Spleen (tissue), 13 donors: ENCODE measurements at regions of chr1 and their contacts with region 1.

Region 1: DNA sequence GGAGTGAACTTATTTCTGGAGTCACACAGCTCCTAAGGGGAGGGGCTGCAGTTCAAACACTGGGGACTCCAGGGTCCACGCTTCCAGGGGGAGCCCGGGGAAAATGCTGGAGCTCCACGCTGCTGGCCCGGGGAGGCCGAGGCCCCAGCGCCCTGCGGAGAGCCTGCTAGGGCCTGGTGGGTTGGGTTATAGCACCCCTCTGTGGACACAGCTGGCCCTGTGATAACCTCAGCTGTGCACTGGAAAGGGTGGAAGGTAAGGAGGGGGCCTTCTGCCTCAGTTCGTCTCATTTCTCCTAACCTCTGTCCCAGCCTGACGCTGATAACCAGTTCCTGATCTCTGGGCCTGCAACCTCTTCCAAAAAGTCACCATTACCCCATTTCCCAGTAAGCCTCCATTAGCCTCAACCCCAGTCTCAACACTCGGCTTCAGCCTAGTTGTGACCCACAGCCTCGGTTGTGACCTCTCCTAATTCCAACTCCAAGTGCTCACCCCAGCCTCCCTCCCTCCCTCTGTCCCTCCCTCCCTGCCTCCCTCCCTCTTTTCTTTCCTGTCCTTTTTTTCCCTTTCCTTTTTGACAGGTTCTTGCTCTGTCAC is 7.1 kb downstream of the NBL1 start:
- DNase-seq: no peak
- H3K4me3 ChIP-seq: peak overlapping the region in 1 of 8 donors; percentile 13
- H3K27ac ChIP-seq: peak overlapping the region in 6 of 8 donors; percentile 27 to 74 (median 48)
- H3K4me1 ChIP-seq: peaks cover 7 to 60% (median 32%) of the 10 kb centered on the region in 6 donors
- H3K27me3 ChIP-seq: peaks cover 0 to 14% (median 0%) of the 10 kb centered on the region in 7 donors
- CTCF ChIP-seq: peak; percentile 26 to 76 (median 59)
- POLR2A ChIP-seq: no peak

Region 2: DNA sequence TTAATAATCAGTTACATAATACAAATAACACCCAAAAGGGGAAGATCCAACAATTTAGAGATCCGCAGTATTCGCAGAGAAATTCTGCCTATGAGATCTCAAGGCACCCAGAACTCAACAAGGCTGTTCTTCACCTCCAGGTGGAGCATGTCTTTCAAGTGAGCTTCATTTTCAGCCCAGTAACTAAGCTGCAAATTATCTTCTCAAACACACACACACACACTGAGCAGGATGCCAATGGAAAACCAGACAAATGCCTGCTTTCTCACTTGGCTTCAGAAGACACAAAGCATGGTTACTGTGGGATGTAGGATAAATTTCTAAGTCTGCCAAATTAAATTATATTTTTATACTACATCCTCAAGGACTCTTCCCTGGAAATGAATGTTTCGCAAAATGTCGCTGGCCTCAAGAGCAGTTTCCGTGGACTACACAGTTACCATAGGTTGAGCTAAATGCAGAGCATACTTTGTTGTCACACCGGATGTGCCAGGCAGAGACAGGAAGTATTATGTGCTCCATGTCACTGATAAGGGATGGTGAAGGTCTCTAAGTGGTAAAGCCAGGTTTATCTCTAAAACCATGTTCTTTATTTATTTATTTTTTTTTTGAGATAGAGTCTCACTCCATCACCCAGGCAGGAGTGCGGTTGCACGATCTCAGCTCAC is 471.5 kb before region 1 on chr1:
- intact Hi-C with region 1: loop called (anchors 5 kb)
- DNase-seq: no peak
- H3K4me3 ChIP-seq: no peak overlapping the region
- H3K27ac ChIP-seq: peak overlapping the region in 5 of 8 donors; percentile 19 to 56 (median 32)
- H3K4me1 ChIP-seq: peaks cover 0 to 16% (median 6%) of the 10 kb centered on the region in 6 donors
- H3K27me3 ChIP-seq: no peaks in the 10 kb centered on the region
- CTCF ChIP-seq: peak in 5 of 11 experiments; percentile 23 to 52 (median 38)
- POLR2A ChIP-seq: no peak

Region 3: DNA sequence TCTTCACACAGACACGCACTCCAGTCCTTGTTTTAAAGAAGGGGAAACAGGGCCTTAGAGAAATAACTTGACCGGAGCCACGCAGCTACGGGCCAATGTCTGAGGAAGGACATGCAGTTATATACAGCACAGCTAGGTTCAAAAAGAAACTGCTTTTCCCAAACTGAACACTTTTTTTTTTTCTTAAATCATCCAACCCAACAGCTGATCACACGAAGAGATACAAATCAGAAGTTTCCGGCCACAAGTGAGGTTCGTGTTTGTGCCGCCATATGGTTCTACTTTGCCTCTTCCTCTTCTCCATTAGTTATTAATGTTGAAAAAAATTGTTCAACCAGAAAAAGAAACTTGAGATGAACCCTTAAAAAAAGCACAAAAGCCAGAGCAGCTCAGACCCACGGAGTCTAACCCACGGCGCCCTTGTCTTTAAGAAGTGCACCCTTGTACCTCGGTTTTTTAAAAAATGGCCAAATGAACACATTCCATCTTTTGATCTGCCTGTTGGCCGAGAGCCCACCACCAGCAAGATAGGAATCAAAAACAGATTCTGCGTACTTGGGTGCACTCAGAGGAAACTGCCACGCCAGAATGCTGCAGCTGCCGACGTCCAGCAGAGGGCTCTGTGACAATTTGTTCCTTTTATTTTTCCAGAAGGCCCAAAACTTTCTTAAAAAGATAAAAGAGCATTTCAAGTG is 260.2 kb before region 1 on chr1:
- intact Hi-C with region 1: loop called (anchors 5 kb)
- DNase-seq: peak; percentile 79
- H3K4me3 ChIP-seq: peak overlapping the region in 3 of 8 donors; percentile 17 to 53 (median 27)
- H3K27ac ChIP-seq: peak overlapping the region; percentile 66 to 85 (median 74)
- H3K4me1 ChIP-seq: peaks cover 46 to 98% (median 81%) of the 10 kb centered on the region in 6 donors
- H3K27me3 ChIP-seq: no peaks in the 10 kb centered on the region
- CTCF ChIP-seq: peak; percentile 57 to 90 (median 80)
- POLR2A ChIP-seq: no peak

Region 4: DNA sequence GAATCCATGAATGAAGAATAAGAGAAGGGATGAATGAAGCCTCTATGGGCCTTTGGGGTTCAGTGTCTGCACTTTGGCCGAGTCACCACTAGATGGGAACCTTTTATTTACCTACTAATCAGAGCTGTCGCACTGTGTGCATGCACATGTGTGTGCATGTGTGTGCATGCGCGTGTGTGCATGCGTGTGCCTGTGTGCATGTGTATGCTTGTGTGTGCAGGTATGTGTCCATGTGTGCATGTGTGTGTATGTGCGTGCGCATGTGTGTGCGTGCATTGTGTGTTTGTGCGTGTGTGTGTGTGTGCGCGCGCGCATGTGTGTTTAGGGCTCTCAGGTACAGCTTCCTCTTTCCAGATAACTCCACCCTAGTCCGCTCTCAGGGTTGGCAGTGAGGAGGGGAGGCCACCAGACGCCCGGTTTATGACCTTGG is 514.3 kb after region 1 on chr1:
- intact Hi-C with region 1: no loop called
- DNase-seq: no peak
- H3K4me3 ChIP-seq: no peak overlapping the region
- H3K27ac ChIP-seq: peak overlapping the region in 1 of 8 donors; percentile 59
- H3K4me1 ChIP-seq: peaks cover 0 to 33% (median 23%) of the 10 kb centered on the region in 6 donors
- H3K27me3 ChIP-seq: no peaks in the 10 kb centered on the region
- CTCF ChIP-seq: peak in 4 of 11 experiments; percentile 24 to 28 (median 25)
- POLR2A ChIP-seq: no peak